K562 (cell line): ENCODE measurements at regions of chr1 and their contacts with region 1.

Region 1: DNA sequence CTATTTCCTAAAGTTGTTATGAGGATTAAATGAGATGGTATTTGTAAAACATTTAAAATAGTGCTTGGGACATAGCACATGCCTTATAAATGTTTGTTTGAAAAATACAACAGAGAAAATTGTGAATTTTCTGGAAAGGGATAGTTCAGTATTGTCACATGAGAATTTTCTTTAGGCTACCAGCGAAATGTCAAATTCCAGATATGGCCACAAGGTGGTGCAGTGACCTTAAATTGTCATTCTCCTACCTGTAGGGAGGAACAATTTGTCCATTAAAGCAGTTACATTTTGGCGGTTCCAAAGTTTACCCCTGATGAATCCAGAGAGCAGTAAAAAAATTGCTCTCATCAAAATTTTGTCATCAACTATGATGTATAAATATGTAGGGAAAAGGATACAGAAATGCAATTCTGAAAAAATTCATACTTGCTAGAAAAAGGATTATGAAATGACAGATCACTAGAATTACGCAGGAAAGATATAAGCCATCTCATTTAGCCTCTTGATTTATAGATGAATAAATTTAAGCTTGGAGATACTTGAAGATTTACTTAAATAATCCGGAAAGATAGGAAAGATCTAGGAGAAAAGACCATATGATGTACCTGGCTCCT is 50.2 kb upstream of the TSHB start:
- DNase-seq: peak; percentile 43 to 64 (median 58)
- ATAC-seq: peak; percentile 63; the same call in 2 of the 3 replicates
- H3K4me3 ChIP-seq: no peak overlapping the region
- H3K27ac ChIP-seq: no peak overlapping the region
- H3K4me1 ChIP-seq: no peaks in the 10 kb centered on the region
- H3K27me3 ChIP-seq: no peaks in the 10 kb centered on the region
- CTCF ChIP-seq: peak; percentile 67 to 81 (median 72)
- EP300 ChIP-seq: no peak
- POLR2A ChIP-seq: no peak
- RAD21 ChIP-seq: peak; percentile 59 to 81

Region 2: GRCh38 chr1:115052454-115053083 is 73.2 kb after region 1 on chr1:
- CTCF ChIA-PET with region 1: interaction called, 3 read pairs
- POLR2A ChIA-PET with region 1: no interaction called
- in situ Hi-C with region 1: no loop called
- intact Hi-C with region 1: loop called (anchors 1 kb)
- DNase-seq: peak; percentile 68 to 70 (median 70)
- ATAC-seq: peak; percentile 97
- H3K4me3 ChIP-seq: no peak overlapping the region
- H3K27ac ChIP-seq: no peak overlapping the region
- H3K4me1 ChIP-seq: no peaks in the 10 kb centered on the region
- H3K27me3 ChIP-seq: peaks cover 6 to 7% of the 10 kb centered on the region in 2 experiments; a peak in 3 of 5 replicates
- CTCF ChIP-seq: peak; percentile 74 to 86 (median 84)
- EP300 ChIP-seq: no peak
- POLR2A ChIP-seq: no peak
- RAD21 ChIP-seq: peak; percentile 67 to 79

Region 3: DNA sequence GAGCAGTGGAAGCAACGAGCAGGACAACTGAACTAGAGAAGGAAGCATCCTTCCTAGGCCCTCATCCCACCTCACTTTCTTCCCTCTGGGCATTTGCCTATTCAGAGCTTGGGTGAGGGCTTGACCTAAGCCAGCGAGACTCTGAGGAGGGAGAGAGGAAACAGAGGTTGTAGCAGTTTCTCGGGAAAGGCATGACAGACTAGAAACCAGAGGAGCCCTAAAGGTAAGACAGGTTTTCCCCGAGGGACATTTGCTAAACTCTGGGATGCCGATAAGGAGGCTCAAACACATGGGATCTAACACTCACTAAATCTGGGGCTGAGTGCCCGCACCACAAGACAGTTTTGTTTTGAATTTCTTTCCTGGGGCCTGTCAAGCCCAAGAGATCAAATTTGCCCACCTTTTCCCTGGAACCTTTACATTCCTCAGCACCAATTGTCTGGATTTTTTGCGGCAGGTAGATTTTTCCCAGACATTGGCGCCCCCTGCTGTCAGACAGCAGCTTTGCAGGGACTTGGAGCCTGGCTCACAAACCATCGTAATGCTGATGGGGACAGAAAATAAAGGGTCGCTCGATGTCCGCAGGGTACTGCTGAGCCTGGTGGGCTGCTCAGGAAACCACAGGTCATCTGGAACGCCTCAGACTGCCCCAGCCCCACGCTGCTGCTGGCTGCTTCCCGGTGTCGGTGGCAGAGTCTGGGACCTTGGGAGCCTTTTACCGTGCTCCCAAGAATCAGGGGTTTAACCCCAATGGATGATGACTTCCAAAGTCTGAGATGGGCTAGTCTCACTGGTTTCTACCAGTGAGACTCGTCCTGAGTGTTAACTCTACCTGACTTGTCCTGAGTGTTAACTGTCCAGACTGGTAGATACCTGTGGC is 133.4 kb after region 1 on chr1:
- CTCF ChIA-PET with region 1: interaction called, 3 read pairs
- POLR2A ChIA-PET with region 1: no interaction called
- in situ Hi-C with region 1: no loop called
- intact Hi-C with region 1: loop called (anchors 1 kb)
- DNase-seq: peak; percentile 43 to 59 (median 50)
- ATAC-seq: peak; percentile 79
- H3K4me3 ChIP-seq: no peak overlapping the region
- H3K27ac ChIP-seq: no peak overlapping the region
- H3K4me1 ChIP-seq: no peaks in the 10 kb centered on the region
- H3K27me3 ChIP-seq: peaks cover 0 to 27% of the 10 kb centered on the region in 2 experiments; a peak in 4 of 5 replicates
- CTCF ChIP-seq: peak; percentile 77 to 96 (median 88)
- EP300 ChIP-seq: no peak
- POLR2A ChIP-seq: no peak
- RAD21 ChIP-seq: peak; percentile 62 to 77

Region 4: GRCh38 chr1:115595279-115596079 is 616.1 kb after region 1 on chr1:
- CTCF ChIA-PET with region 1: no interaction called
- POLR2A ChIA-PET with region 1: interaction called, 3 read pairs
- in situ Hi-C with region 1: no loop called
- intact Hi-C with region 1: loop called (anchors 2 kb)
- DNase-seq: peak; percentile 75 to 82 (median 78)
- ATAC-seq: peak; percentile 100
- H3K4me3 ChIP-seq: no peak overlapping the region
- H3K27ac ChIP-seq: no peak overlapping the region
- H3K4me1 ChIP-seq: no peaks in the 10 kb centered on the region
- H3K27me3 ChIP-seq: no peaks in the 10 kb centered on the region
- CTCF ChIP-seq: peak; percentile 88 to 93 (median 93)
- EP300 ChIP-seq: no peak
- POLR2A ChIP-seq: no peak
- RAD21 ChIP-seq: peak; percentile 83 to 91